MCF 10A (cell line): ENCODE measurements at regions of chr15 and their contacts with region 1.

Region 1: DNA sequence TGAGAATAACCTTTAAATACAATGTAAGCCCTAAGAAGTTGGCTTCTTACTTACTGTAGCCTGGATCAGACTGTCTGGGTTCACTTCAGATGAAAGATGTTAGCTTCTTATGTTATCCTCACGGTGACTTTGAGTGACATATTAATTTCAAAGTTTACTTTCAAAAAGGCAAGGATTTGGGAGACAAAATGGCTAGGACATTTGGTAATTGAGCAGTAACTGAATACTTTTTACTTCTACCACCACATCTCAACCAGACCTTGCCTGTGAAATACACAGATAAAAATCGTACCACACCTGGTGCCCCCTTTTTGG is 36.0 kb upstream of the BNIP2 start:
- DNase-seq: no peak
- H3K4me3 Mint-ChIP-seq: no peak overlapping the region
- H3K27ac Mint-ChIP-seq: no peak overlapping the region
- H3K4me1 Mint-ChIP-seq: no peaks in the 10 kb centered on the region
- H3K27me3 Mint-ChIP-seq: peaks cover 13% of the 10 kb centered on the region
- CTCF ChIP-seq: no peak

Region 2: DNA sequence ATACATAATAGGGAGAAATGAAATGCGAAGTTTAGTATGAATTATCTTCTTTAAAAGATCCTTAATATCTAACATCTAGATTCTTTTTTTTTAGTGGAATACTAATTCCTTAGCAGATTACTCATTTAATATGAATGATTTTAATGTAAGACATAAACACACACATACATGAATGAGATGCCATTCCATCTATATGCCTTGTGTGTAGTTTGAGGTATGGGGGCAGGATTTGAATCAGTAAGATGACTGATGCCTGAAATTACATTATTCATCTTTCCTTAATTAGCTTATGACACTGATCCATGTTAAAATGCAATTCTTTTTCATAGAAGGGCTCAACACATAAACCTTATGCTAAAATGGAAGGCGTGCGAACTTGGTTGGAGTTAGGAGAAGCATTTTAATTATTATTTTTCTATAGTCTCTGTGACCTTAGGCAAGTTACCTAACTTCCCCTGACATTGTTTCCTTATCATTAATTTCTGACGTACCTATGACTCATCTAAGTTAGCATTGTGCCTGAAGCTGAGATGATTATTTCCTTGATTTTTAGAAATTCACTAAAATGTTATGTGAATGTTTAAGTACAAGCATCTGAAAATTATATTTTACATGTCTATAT is 25.2 kb before region 1 on chr15:
- CTCF ChIA-PET with region 1: interaction called, 16 read pairs
- POLR2A ChIA-PET with region 1: interaction called, 3 read pairs
- intact Hi-C with region 1: no loop called
- DNase-seq: peak; percentile 43
- H3K4me3 Mint-ChIP-seq: no peak overlapping the region
- H3K27ac Mint-ChIP-seq: no peak overlapping the region
- H3K4me1 Mint-ChIP-seq: peaks cover 12% of the 10 kb centered on the region
- H3K27me3 Mint-ChIP-seq: no peaks in the 10 kb centered on the region
- CTCF ChIP-seq: no peak

Region 3: DNA sequence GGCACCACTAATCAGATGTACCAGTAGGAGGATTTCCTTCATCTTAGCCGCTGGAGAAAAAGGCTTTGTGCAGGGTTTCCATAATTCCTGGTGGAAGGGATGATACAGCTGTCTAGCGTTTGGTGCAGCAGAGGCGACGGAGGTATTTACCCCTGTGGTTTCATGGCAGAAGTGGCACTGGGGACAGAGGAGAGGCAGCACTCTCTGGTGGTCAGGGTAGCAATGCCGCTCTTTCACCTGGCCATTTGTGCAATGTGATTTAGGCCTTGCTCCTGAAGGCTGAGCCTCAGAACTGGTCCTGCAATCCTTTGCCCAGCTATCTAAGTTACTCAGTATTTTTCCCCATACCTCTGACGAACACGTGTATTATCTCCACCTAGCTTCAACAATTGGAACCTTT is 11.1 kb after region 1 on chr15:
- CTCF ChIA-PET with region 1: interaction called, 23 read pairs
- POLR2A ChIA-PET with region 1: interaction called, 4 read pairs
- intact Hi-C with region 1: no loop called
- DNase-seq: no peak
- H3K4me3 Mint-ChIP-seq: no peak overlapping the region
- H3K27ac Mint-ChIP-seq: no peak overlapping the region
- H3K4me1 Mint-ChIP-seq: no peaks in the 10 kb centered on the region
- H3K27me3 Mint-ChIP-seq: no peaks in the 10 kb centered on the region
- CTCF ChIP-seq: no peak

Region 4: DNA sequence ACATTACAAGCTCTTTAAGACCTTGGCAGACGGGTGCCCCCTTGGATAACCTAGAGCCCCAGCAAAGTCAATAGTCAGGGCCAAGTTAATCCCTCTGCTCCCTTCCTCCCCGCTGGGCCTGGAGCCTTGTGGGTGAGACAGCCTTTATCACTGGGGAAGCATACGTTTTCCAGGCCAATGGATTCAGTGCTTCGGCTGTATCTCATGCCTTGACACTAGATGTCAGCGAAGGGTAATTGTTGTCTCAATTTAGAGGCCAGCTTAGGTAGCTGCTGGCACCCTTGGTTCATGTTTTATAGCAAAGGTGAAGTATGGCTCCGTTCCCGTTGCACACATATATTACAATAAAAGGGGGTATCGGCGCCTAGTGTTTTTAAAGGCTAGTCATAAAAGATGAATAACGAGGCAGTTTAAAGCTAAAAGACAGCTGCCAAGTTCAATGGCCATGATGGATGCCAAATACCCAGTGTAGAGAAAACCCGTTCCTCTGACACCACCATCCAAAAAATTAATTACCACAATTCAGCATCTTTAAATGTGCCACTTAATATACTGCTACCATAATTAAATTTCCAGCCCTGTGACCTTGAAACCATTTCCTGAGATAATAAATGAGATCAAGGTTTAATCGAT is 16.3 kb after region 1 on chr15:
- CTCF ChIA-PET with region 1: interaction called, 23 read pairs
- POLR2A ChIA-PET with region 1: interaction called, 4 read pairs
- intact Hi-C with region 1: no loop called
- DNase-seq: peak; percentile 57
- H3K4me3 Mint-ChIP-seq: no peak overlapping the region
- H3K27ac Mint-ChIP-seq: no peak overlapping the region
- H3K4me1 Mint-ChIP-seq: no peaks in the 10 kb centered on the region
- H3K27me3 Mint-ChIP-seq: no peaks in the 10 kb centered on the region
- CTCF ChIP-seq: peak; percentile 43